ENCODE measurements at regions of chr7 and their contacts with region 1.

Region 1: DNA sequence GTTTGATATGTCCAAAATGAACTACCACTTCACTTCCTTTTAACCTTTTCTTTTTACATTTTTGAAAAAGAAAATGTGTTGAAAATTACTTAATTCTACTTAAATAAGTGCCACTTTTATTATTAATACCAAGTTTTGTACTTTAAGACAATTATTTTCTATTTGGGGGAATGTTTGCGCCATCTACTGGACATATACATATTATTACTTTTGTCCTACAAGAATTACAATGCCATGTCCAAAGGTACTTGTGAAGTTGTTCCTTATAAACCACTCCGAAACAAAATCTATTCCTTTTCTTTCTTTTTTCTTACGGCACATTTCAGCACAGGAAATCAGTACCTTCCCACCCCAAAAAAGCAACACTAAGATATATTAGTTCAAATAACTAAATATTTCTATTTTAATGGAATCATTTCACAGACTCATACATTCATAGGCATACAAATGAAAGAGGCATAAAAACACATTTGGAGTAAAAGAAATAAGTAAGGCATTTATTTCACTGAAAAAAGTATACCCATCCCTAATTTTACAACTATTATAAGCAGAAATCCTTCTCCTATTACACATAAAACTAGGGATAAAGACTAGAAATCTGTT is 169.9 kb downstream of the RNF133 start:
- DNase-seq: no peak
- H3K4me3 ChIP-seq: no peak overlapping the region
- H3K27ac ChIP-seq: no peak overlapping the region
- H3K4me1 ChIP-seq: no peaks in the 10 kb centered on the region
- H3K27me3 ChIP-seq: no peaks in the 10 kb centered on the region
- CTCF ChIP-seq: peak in 5 of 6 experiments; percentile 5 to 54 (median 41)
- POLR2A ChIP-seq: no peak

Region 2: DNA sequence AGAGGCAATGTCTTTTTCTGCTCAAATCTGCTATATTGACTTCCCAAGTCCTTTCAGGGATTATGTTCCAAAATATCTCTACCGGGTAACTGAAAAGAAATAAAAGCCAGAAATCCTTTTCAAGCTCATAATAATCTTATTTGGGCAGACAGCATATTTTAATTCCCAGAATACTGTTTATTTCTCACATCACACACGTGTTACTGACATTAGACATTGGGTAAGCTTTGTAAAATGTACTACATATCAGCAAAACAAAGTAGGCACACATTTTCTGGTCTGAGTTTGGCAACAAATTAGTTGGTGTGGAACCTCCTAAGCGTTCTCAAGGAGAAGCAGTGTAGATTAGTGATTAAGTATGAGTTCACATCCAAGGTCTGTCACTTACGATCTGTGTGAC is 666.4 kb before region 1 on chr7:
- intact Hi-C with region 1: no loop called
- DNase-seq: no peak
- H3K4me3 ChIP-seq: no peak overlapping the region
- H3K27ac ChIP-seq: no peak overlapping the region
- H3K4me1 ChIP-seq: no peaks in the 10 kb centered on the region
- H3K27me3 ChIP-seq: no peaks in the 10 kb centered on the region
- CTCF ChIP-seq: no peak
- POLR2A ChIP-seq: no peak

Region 3: DNA sequence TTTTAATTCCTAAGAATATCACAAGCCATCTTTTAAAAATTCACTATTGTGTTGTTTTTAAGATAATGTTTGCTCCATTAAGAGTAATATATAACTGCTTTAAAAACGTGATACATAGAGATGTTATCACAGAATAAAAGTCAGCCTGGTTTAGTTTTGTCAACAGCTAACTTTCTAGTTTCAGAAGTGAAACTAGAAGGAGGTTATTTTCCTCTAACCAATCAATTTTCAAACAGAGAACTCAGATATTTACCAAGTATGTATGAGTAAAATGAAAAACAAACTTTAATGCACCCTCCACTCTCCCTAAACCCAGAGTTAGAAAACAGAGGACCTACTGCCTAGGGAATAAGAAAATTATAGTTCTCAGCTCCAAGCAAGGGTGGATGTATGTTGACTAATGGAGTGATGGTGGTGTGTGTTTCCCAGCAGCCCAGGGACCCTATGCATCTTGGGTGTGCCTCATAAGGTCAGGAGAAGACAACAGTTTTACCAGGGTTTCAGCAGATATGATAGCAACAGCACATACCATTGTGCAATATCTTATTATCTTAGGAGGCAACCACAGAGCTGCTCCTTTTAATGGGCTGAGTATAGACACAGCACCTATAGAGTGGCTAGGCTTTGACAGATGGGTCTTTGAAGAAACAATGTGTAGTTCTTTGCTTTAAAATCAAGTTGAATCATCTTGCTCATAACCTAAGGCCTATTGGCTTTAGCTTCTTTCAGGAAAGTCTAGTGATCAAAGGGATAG is 597.7 kb before region 1 on chr7:
- intact Hi-C with region 1: no loop called
- DNase-seq: no peak
- H3K4me3 ChIP-seq: no peak overlapping the region
- H3K27ac ChIP-seq: no peak overlapping the region
- H3K4me1 ChIP-seq: peaks cover 0 to 15% (median 5%) of the 10 kb centered on the region in 3 donors
- H3K27me3 ChIP-seq: no peaks in the 10 kb centered on the region
- CTCF ChIP-seq: no peak
- POLR2A ChIP-seq: no peak

Region 4: GRCh38 chr7:122219253-122219865 is 309.6 kb before region 1 on chr7:
- intact Hi-C with region 1: loop called (anchors 5 kb)
- DNase-seq: no peak
- H3K4me3 ChIP-seq: no peak overlapping the region
- H3K27ac ChIP-seq: no peak overlapping the region
- H3K4me1 ChIP-seq: no peaks in the 10 kb centered on the region
- H3K27me3 ChIP-seq: no peaks in the 10 kb centered on the region
- CTCF ChIP-seq: peak; percentile 22 to 76 (median 64)
- POLR2A ChIP-seq: no peak